ENCODE measurements at regions of chr1 and their contacts with region 1.

Region 1: GRCh38 chr1:113325039-113325438 is 65.3 kb upstream of the MAGI3 start:
- DNase-seq: no peak
- ATAC-seq: no peak
- H3K4me3 ChIP-seq: no peak overlapping the region
- H3K27ac ChIP-seq: no peak overlapping the region
- H3K4me1 ChIP-seq: peaks cover 0 to 11% (median 0%) of the 10 kb centered on the region in 12 donors
- H3K27me3 ChIP-seq: no peaks in the 10 kb centered on the region
- CTCF ChIP-seq: no peak
- POLR2A ChIP-seq: no peak

Region 2: GRCh38 chr1:113191579-113192076 is 133.4 kb before region 1 on chr1:
- intact Hi-C with region 1: loop called in 1 of 10 experiments (anchors 10 kb)
- DNase-seq: no peak
- ATAC-seq: peak in 3 of 4 donors; percentile 27 to 78 (median 34)
- H3K4me3 ChIP-seq: no peak overlapping the region
- H3K27ac ChIP-seq: no peak overlapping the region
- H3K4me1 ChIP-seq: peaks cover 0 to 4% (median 0%) of the 10 kb centered on the region in 12 donors
- H3K27me3 ChIP-seq: no peaks in the 10 kb centered on the region
- CTCF ChIP-seq: no peak
- POLR2A ChIP-seq: no peak